Right cardiac atrium (tissue), 5 donors: ENCODE measurements at regions of chr11 and their contacts with region 1.

Region 1: DNA sequence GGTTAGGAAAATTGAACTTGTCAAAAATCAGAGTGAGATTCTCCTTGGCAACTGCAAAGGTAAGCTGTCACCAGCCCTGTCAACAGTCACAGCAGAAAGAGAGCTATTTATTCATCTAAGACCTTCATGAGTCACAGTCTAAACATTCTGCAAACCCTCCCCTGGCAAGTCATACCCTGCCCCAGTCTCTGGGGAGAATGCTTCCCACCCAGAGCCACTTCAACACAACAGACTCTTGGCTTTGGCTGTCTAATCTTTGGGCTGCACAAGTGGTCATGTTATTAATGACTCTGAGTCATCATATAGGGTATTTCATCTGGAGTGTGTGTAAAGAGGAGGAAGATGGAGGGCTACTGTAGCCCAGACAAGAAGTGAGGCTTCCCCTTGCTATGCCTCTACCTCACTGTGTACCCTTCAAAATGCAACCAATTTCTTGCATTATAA is 153.4 kb downstream of the CCDC34 start:
- DNase-seq: peak; percentile 79 to 85 (median 81)
- ATAC-seq: peak; percentile 83 to 90
- H3K4me3 ChIP-seq: no peak overlapping the region
- H3K27ac ChIP-seq: no peak overlapping the region
- H3K4me1 ChIP-seq: peaks cover 5% of the 10 kb centered on the region
- H3K27me3 ChIP-seq: no peaks in the 10 kb centered on the region

Region 2: GRCh38 chr11:27296497-27296896 is 86.9 kb after region 1 on chr11:
- intact Hi-C with region 1: loop called in 2 of 4 experiments (anchors 10 kb)
- DNase-seq: no peak
- ATAC-seq: peak; percentile 71 to 79
- H3K4me3 ChIP-seq: no peak overlapping the region
- H3K27ac ChIP-seq: no peak overlapping the region
- H3K4me1 ChIP-seq: no peaks in the 10 kb centered on the region
- H3K27me3 ChIP-seq: no peaks in the 10 kb centered on the region